MCF 10A (cell line): ENCODE measurements at regions of chr16 and their contacts with region 1.

Region 1: DNA sequence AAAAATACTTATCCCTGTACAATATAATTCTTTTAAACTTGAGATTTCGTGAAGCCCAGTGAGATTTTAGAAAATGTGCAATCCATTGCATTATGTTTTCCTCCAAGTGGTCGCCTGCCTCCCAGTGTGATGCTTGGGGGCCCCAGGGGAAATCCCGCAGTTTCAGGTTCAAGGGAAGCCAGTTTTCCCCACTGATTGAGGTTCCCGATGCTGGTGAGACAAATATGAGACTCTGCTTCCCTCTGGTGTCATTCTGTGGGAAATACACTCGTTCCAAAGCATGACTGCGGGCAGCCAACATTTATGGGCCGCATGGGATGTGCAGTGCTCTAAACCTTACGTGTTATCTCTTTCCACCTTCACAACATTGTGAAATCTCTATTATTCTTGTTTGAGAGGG is 200.8 kb downstream of the PRKCB start:
- DNase-seq: peak; percentile 55
- H3K4me3 Mint-ChIP-seq: no peak overlapping the region
- H3K27ac Mint-ChIP-seq: no peak overlapping the region
- H3K4me1 Mint-ChIP-seq: no peaks in the 10 kb centered on the region
- H3K27me3 Mint-ChIP-seq: peaks cover 38% of the 10 kb centered on the region
- CTCF ChIP-seq: peak; percentile 81

Region 2: DNA sequence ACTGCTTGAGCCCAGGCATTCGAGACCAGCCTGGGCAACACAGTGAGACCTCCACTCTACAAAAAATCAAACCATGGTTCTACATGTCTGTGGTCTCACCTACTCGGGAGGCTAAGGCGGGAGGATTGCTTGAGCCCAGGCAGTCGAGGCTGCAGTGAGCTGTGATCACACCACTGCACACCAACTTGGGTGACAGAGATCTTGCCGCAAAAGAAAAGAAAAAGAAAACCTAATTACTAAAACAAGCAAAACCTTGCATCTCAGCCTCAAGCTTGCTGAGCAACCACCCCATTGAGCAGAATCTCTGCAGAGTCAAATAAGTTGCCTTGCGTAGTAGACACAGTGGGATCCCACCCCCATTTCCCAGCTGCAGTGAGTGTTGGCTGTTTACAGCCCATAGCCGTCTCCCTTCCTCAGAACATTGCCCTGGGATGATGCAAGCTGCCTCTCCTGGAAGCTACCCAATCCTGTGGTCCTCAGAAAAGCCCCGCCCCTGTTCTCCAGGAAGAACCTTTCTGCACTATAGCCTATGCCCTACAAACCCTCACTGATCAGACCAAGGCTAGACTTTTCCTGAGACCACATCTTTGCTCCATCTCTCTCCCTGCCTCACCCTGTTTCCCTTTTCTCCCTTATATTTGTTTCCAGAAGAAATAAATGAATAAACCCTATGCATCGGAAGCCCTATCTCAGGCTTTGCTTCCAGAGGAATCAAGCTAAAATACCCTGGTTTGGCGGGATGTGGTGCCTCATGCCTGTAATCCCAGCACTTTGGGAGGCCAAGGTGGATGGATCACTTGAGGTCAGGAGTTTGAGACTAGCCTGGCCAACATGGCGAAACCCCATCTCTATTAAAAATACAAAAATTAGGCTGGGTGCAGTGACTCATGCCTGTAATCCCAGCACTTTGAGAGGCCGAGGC is 306.9 kb before region 1 on chr16:
- CTCF ChIA-PET with region 1: interaction called, 83 read pairs
- POLR2A ChIA-PET with region 1: no interaction called
- intact Hi-C with region 1: no loop called
- DNase-seq: peak; percentile 78
- H3K4me3 Mint-ChIP-seq: no peak overlapping the region
- H3K27ac Mint-ChIP-seq: no peak overlapping the region
- H3K4me1 Mint-ChIP-seq: peaks cover 14% of the 10 kb centered on the region
- H3K27me3 Mint-ChIP-seq: no peaks in the 10 kb centered on the region
- CTCF ChIP-seq: no peak

Region 3: GRCh38 chr16:23796941-23797340 is 239.7 kb before region 1 on chr16:
- CTCF ChIA-PET with region 1: interaction called, 94 read pairs
- POLR2A ChIA-PET with region 1: no interaction called
- intact Hi-C with region 1: no loop called
- DNase-seq: no peak
- H3K4me3 Mint-ChIP-seq: no peak overlapping the region
- H3K27ac Mint-ChIP-seq: no peak overlapping the region
- H3K4me1 Mint-ChIP-seq: no peaks in the 10 kb centered on the region
- H3K27me3 Mint-ChIP-seq: no peaks in the 10 kb centered on the region
- CTCF ChIP-seq: no peak

Region 4: GRCh38 chr16:23941963-23942564 is 94.5 kb before region 1 on chr16:
- CTCF ChIA-PET with region 1: no interaction called
- POLR2A ChIA-PET with region 1: no interaction called
- intact Hi-C with region 1: no loop called
- DNase-seq: no peak
- H3K4me3 Mint-ChIP-seq: no peak overlapping the region
- H3K27ac Mint-ChIP-seq: no peak overlapping the region
- H3K4me1 Mint-ChIP-seq: no peaks in the 10 kb centered on the region
- H3K27me3 Mint-ChIP-seq: peaks cover 44% of the 10 kb centered on the region
- CTCF ChIP-seq: no peak

Region 5: DNA sequence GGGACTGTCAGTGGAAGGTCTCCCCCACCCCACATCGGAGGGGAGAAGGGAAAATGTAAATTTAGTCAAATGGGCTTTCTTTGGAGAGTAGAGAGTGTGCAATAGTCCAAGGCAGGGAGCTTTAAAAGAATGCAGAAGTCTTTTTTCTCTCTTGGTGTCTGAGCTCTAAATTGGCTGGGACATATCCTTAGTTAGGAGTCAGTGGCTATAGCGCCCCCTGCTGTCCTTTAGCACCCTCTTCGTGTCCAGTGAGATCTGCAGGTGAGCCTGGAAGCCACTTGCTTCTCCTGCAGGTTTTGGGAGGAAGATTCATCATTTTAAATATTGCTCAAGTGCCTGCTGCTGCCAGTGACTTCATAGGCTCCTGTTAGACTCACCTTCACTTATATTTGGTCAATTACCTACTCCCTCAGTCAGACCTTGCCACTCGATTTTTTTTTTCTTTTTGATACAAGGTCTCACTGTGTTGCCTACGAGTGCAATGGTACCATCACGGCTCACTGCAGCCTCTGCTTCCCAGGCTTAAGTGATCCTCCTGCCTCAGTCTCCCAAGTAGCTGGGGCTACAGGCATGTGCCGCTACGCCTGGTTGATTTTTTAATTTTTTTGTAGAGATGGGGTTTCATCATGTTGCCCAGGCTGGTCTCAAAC is 26.0 kb before region 1 on chr16:
- CTCF ChIA-PET with region 1: interaction called, 16 read pairs
- POLR2A ChIA-PET with region 1: interaction called, 3 read pairs
- intact Hi-C with region 1: no loop called
- DNase-seq: peak; percentile 83
- H3K4me3 Mint-ChIP-seq: no peak overlapping the region
- H3K27ac Mint-ChIP-seq: no peak overlapping the region
- H3K4me1 Mint-ChIP-seq: no peaks in the 10 kb centered on the region
- H3K27me3 Mint-ChIP-seq: peaks cover 24% of the 10 kb centered on the region
- CTCF ChIP-seq: peak; percentile 77